SK-N-SH (cell line): ENCODE measurements at regions of chr7 and their contacts with region 1.

Region 1: DNA sequence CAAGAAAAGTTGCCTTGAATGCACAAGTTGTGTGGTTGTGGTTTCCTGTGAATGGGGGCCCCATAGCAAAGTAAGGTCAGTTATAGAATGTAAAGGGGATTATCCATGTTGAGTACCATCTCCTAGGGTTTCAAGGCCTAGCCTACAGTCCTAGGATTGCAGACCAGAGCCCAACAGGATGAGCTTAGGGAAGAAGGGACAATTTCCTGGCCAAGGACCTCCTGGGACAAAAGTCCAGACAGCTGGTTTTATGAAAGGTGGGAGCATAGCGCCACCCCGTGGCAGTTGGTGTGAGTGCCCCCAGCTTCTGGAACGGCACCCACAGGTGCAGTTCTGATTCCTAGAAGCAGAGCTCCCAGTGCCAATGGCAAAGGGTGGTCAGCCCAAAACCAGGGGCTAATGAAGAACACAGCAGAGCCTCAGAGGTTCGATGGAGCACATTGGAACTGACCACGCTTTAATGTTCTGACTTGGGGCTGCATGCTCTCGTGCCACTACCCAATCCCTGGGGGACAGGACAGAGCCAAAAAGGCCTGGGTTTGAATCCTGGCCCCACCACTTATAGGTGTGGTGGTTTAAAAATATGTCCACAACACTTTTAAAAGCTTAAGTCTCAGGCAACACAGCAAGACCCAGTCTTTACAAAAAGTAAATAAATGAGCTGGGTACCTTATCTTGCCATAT is 25.8 kb upstream of the TMEM120A start:
- DNase-seq: peak; percentile 85
- H3K4me3 ChIP-seq: no peak overlapping the region
- H3K27ac ChIP-seq: no peak overlapping the region
- H3K4me1 ChIP-seq: no peaks in the 10 kb centered on the region
- H3K27me3 ChIP-seq: no peaks in the 10 kb centered on the region
- CTCF ChIP-seq: peak; percentile 99
- EP300 ChIP-seq: no peak
- RAD21 ChIP-seq: peak; percentile 99

Region 2: GRCh38 chr7:75762314-75762917 is 257.8 kb before region 1 on chr7:
- CTCF ChIA-PET with region 1: interaction called, 11 read pairs
- POLR2A ChIA-PET with region 1: no interaction called
- DNase-seq: peak; percentile 84
- H3K4me3 ChIP-seq: no peak overlapping the region
- H3K27ac ChIP-seq: no peak overlapping the region
- H3K4me1 ChIP-seq: no peaks in the 10 kb centered on the region
- H3K27me3 ChIP-seq: no peaks in the 10 kb centered on the region
- CTCF ChIP-seq: peak; percentile 91
- EP300 ChIP-seq: no peak
- RAD21 ChIP-seq: peak; percentile 99

Region 3: DNA sequence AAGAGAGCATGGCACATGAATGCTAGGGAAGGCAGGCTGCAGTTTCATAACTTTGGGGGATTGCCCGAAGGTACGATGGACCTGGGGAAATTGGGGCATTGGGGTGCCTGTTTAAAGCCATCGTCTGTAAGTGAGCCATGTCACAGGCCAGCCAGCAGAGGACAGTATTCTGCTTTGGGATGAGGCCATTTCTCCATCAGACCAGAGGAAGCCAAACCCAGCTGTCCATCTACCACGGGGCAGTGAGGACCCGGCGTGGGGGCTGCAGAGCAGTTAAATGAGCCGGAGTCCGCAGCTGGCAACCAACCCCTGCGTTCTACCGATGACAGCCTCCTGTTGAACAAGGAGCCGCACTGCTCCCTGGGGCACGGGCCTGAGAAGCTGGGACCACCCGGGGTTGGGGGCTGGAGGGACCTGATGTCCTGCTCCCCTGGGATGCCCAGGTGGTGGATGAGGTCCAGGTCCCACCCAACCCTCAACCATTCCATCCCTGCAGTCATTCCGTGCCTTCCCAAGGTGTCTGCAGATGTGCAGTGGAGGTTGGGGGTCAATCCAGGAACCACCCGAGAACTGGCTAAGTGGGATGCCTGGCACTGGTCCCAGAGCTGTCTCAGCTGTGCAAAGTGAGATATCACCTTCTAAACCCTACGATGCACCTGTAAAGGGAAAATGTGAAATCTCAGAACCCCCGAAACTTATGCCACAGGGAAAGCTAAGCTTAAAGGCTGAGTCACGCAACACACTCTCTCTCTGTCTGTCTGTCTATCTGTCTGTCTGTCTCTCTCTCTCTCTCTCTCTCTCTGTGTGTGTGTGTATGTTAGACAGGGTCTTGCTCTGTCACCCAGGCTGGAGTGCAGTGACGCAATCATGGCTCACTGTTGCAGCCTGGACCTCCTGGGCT is 153.4 kb before region 1 on chr7:
- CTCF ChIA-PET with region 1: interaction called, 305 read pairs
- POLR2A ChIA-PET with region 1: interaction called, 13 read pairs
- DNase-seq: peak; percentile 86
- H3K4me3 ChIP-seq: no peak overlapping the region
- H3K27ac ChIP-seq: no peak overlapping the region
- H3K4me1 ChIP-seq: peaks cover 3 to 6% of the 10 kb centered on the region in 2 experiments; a peak in 1 of 4 replicates
- H3K27me3 ChIP-seq: no peaks in the 10 kb centered on the region
- CTCF ChIP-seq: peak; percentile 97
- EP300 ChIP-seq: no peak
- RAD21 ChIP-seq: peak; percentile 97

Region 4: GRCh38 chr7:75891815-75892411 is 128.3 kb before region 1 on chr7:
- CTCF ChIA-PET with region 1: interaction called, 13 read pairs
- POLR2A ChIA-PET with region 1: interaction called, 3 read pairs
- DNase-seq: no peak
- H3K4me3 ChIP-seq: no peak overlapping the region
- H3K27ac ChIP-seq: no peak overlapping the region
- H3K4me1 ChIP-seq: no peaks in the 10 kb centered on the region
- H3K27me3 ChIP-seq: no peaks in the 10 kb centered on the region
- CTCF ChIP-seq: no peak
- EP300 ChIP-seq: no peak
- RAD21 ChIP-seq: no peak

Region 5: GRCh38 chr7:75994388-75995051 is 25.7 kb before region 1 on chr7 and contains the start of gene TMEM120A:
- CTCF ChIA-PET with region 1: interaction called, 56 read pairs
- POLR2A ChIA-PET with region 1: interaction called, 3 read pairs
- DNase-seq: peak; percentile 100
- H3K4me3 ChIP-seq: peak within 1 kb of the TSS; percentile 69 to 84
- H3K27ac ChIP-seq: peak within 1 kb of the TSS; percentile 40 to 84; a peak in 3 of 4 replicates
- H3K4me1 ChIP-seq: peaks cover 6 to 20% of the 10 kb centered on the region in 2 experiments; a peak in 2 of 4 replicates
- H3K27me3 ChIP-seq: no peaks in the 10 kb centered on the region
- CTCF ChIP-seq: no peak
- EP300 ChIP-seq: peak in 1 of 2 experiments; percentile 22; a peak in 2 of 4 replicates
- RAD21 ChIP-seq: 0 out of 2 replicates have a peak, but pooled peaks have one; percentile 1
- polyA plus RNA-seq, gene TMEM120A: 59.8 and 95.2 TPM in 2 replicates

Region 6: GRCh38 chr7:76037310-76037709 is 17.1 kb after region 1 on chr7:
- CTCF ChIA-PET with region 1: interaction called, 70 read pairs
- POLR2A ChIA-PET with region 1: interaction called, 4 read pairs
- DNase-seq: no peak
- H3K4me3 ChIP-seq: no peak overlapping the region
- H3K27ac ChIP-seq: peak overlapping the region in 1 of 2 experiments; percentile 6; a peak in 1 of 4 replicates
- H3K4me1 ChIP-seq: peaks cover 0 to 12% of the 10 kb centered on the region in 2 experiments; a peak in 1 of 4 replicates
- H3K27me3 ChIP-seq: no peaks in the 10 kb centered on the region
- CTCF ChIP-seq: no peak
- EP300 ChIP-seq: no peak
- RAD21 ChIP-seq: no peak

Region 7: GRCh38 chr7:76282344-76283253 is 262.4 kb after region 1 on chr7:
- CTCF ChIA-PET with region 1: no interaction called
- POLR2A ChIA-PET with region 1: no interaction called
- DNase-seq: peak; percentile 60
- H3K4me3 ChIP-seq: peak overlapping the region in 1 of 2 experiments; percentile 12; a peak in 1 of 4 replicates
- H3K27ac ChIP-seq: no peak overlapping the region
- H3K4me1 ChIP-seq: peaks cover 3 to 8% of the 10 kb centered on the region in 2 experiments; a peak in 2 of 4 replicates
- H3K27me3 ChIP-seq: no peaks in the 10 kb centered on the region
- CTCF ChIP-seq: no peak
- EP300 ChIP-seq: no peak
- RAD21 ChIP-seq: no peak